GM13977 (cell line): ENCODE measurements at regions of chr18 and their contacts with region 1.

Region 1: GRCh38 chr18:47772374-47773248 is 157.8 kb downstream of the SMAD2 start:
- DNase-seq: peak; percentile 57
- CTCF ChIP-seq: peak; percentile 96

Region 2: DNA sequence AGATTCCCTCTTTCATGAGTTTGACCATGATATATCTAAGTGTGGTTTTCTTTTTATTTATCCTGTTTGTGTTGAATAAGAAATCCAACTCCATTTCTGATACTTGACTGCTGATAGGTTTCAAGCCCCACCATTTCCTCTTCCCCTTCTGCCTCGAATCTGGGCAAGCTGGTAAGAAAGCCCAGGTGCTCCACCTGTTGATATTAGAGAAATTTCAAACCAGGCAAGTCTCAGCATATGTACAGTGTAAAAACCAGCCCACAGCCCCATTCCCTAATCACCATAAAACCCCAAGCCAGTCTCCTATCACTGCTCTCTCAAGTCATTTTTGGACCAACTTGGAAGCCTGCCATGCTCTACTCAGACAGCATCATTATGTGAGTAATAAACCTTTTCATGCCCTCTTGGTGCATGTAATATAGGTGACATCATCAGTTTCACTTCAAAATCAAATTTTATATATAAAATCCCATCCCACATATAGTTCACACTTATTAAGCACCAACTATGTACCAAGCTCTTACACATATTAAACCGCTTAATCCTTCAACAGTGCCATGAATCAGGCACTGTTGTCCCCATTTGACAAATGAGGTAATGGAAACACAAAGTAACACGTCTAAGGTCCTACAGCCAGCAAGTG is 111.3 kb after region 1 on chr18:
- in situ Hi-C with region 1: no loop called
- DNase-seq: no peak
- CTCF ChIP-seq: no peak

Region 3: DNA sequence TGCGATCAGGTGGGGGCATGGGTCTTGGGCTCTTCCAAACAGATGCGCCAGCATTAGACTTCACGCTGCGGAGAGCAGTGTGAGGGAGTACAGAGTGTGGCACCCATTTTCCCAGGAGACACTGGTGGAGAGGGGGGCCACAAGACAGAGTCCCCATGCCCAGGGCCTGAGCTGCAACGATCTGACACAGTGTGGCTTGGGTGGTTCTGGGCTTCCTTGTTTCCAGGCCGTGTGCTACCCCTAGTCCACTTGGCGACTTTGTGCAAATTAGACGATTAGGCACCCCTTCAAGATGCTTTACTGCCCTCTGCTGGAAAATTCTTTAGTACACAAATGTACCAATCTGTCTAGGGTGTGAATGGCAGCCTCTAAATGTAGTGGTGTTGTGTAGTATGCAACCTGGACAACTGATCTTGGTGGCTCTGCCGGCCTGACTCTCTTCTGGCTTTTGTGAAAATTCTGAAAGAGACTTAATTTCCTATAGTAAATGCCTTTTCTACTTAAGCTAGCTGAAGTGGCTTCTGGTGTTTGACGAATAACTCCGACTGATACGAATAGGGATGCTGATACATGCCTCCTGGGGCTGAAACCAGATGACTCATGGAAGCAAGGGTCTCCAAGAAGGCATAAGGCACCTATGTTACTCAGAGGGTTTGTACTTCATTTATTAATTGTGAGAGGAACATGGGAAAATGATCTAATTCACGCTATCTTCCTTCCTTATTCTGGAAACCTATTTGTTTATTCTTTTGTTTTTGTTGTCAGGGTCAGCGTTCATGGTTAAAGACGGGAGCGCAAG is 250.1 kb after region 1 on chr18:
- in situ Hi-C with region 1: loop called (anchors 10 kb)
- DNase-seq: peak; percentile 74
- CTCF ChIP-seq: peak; percentile 53